Posterior cingulate gyrus (tissue), 11 donors: ENCODE measurements at regions of chr14 and their contacts with region 1.

Region 1: DNA sequence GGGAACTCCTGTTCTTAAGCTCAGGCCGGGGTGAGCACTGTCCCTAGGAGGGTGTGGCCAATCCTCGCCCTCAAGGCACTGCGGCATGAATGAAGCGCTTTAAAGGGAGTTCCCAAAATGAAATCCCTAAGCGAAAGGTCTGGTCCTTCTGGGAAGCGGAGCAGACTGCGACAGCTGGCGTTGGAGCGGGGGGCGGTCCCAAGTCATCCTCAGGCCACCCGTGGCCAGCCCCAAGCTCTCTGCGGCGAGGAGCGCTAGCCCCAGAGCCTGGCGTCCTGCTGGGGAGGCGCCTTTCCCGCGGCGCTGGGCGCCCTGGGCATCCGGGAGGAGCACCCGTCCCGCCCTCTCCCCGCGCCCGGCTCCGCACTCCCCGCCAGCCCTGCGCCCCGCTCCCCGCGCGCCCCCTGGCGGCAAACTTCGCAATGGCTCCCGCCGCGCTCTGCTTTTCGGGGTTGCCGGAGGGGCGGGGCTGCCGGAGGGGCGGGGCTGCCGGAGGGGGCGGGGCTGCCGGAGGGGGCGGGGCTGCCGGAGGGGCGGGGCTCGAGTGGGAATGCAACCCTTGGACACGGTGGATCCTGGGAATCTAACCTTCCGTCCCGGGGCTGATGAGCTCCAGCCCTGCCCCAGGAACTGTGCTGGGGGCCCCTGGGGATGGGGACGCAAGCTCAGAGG is 25.4 kb downstream of the ZBTB42 start:
- DNase-seq: peak; percentile 79 to 98 (median 90)

Region 2: DNA sequence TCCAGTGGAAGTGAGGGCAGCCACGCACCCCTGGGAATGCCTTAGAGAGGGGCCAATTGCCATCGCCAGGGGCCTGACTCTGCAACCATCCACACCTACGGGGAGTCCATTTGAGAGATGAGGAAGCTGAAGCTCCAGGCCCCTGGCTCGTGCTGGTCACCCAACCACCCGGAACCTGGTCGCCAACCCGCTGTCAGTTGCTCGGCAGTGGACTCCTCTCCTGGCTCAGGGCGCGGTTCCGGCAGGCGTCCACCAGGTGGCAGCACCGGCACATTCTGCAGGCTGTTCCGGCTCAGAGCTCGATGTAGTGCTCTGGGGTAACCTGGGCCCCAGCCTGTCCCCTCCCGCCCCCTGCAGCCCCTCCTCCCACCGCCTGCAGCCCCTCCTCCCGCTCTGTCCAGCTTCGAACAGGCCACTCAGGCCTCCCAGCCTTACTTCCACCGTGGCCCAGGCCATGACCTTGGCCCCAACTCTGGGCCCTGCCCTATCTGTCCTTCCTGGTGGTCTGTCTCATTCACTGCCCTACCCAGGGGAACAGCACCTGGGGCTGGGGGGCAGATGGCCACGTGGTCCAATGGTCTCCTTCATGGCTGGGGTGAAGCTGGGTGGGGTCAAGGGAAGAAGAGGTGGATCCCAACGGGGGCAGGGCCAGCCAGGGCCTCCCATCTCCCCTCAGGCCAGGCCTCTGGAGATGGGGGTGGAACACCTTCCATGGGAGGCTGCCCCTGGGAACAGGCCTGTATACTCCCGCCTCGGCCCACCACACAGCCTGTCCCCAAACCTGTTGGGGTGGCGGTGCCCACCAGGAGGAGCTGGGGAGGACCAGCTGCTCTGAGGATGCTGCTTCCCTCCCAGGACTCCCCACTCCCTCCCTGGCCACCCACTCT is 57.6 kb before region 1 on chr14:
- intact Hi-C with region 1: loop called (anchors 1 kb)
- DNase-seq: peak; percentile 84 to 99 (median 96)

Region 3: GRCh38 chr14:104813291-104813690 is 13.0 kb before region 1 on chr14:
- intact Hi-C with region 1: no loop called
- DNase-seq: peak in 2 of 10 donors; percentile 39 to 53

Region 4: GRCh38 chr14:104852280-104852663 is 25.9 kb after region 1 on chr14:
- intact Hi-C with region 1: no loop called
- DNase-seq: peak in 3 of 10 donors; percentile 16 to 49 (median 37)

Region 5: DNA sequence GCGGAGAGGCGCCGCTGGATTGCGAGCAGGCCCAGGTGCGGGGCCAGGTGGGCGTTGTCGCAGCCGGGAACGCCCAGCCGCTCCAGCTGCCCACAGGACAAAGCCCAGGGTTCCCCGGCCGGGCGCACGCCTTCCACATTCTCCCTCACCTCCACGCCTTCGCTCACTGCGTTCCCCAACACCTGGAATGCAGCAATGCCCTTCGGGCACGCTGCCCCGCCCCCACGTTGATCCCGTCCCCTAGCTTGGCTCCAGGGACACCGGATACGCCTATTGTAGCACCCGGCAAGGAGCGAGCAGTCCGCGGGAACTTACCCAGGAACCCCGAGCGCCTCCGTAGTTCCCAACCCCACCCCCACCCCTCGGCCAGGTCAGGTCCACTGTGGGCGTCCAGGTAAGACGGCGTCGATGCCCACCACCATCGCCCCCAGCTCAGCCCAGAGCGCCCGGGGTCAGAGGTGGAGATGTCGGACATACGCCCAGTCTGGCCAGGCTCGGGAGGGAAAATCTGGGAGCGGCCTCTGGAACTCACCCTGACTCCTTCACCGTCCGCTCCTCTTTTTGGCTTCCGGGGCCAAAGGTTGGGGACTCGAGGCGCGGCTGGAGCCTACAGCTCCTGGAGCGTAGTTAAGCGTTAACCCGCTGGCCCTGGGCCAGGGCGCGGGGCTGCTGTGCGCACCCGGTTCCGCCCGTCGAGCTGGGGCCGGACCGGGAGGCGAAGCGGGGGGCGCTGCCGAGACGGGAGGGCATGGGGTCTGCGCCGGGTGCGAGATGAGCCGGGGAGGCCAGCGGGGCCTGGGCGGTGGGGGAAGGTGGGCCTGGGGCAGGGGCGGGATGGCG is 38.1 kb after region 1 on chr14:
- intact Hi-C with region 1: loop called (anchors 5 kb)
- DNase-seq: peak in 3 of 10 donors; percentile 67 to 83 (median 80)